ENCODE measurements at regions of chr1 and their contacts with region 1.

Region 1: DNA sequence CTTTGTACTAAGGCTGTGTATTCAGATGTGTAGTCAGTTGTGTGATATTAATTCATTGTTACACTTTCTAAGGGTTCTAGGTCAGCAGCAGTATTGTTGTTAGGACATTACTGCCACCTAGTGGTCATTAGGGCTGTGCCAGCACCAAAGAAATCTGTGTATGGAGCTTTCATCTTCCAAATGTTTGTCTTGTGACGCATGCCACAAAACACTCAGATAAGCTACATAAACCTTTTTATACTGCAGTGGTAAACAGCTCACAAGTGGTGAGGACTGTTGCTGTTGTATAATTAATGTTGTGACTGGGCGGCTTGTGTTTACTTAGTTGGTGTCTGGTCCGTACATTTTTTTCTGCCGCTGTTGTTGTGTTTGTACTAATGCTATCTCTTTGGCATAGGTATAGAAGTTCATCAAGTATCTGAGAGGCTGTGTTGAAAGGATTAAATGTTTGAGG is 51.7 kb downstream of the S1PR1 start:
- DNase-seq: peak; percentile 77 to 82 (median 80)
- H3K4me3 ChIP-seq: no peak overlapping the region
- H3K4me3 Mint-ChIP-seq: peak overlapping the region in 7 of 8 donors; percentile 12 to 78 (median 18)
- H3K27ac ChIP-seq: no peak overlapping the region
- H3K27ac Mint-ChIP-seq: peak overlapping the region; percentile 76 to 87 (median 86)
- H3K4me1 ChIP-seq: peaks cover 89% of the 10 kb centered on the region
- H3K4me1 Mint-ChIP-seq: peaks cover 58 to 90% (median 71%) of the 10 kb centered on the region in 4 donors
- H3K27me3 ChIP-seq: no peaks in the 10 kb centered on the region
- H3K27me3 Mint-ChIP-seq: no peaks in the 10 kb centered on the region

Region 2: DNA sequence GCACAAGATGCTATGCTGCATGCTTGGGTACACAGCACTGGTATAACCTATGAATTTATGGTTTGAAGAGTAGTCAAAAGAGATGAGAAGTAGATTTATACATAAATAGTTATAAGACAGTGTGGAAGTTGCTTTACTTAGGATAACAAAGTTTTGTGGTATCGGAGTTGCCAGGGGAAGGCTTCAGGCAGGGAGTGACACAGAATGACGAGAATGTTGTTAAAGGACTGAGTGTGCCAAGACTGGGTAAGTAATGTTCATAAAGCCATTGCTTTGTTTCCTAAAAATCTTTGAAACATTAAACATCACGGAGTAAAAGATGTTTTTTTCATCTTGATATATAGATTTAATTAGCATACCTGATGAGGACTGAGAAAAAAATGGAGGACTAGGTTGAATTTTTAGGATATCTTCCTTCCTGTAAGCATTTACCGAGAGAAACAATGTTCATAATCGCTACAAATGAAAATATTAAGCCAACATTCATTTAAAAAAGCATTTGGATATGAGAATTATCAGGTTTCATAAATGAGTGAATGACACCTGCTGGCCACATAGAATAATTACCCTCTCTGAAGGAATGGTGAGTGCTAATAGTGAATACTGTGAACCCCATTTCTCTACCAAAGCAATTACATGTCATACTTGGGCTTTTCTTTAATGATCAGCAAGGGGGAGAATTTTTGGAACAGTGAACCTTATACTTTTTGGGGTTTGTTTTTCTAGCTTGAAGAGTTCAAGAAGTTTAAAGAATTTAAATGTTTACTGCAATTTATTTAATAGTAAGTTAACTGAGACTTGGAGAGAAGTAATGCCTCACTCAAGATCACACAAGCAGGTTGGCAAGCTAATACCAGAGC is 422.2 kb before region 1 on chr1:
- CTCF ChIA-PET with region 1: interaction called, 14 read pairs
- POLR2A ChIA-PET with region 1: no interaction called
- intact Hi-C with region 1: no loop called
- DNase-seq: peak in 4 of 5 donors; percentile 16 to 26 (median 22)
- H3K4me3 ChIP-seq: no peak overlapping the region
- H3K4me3 Mint-ChIP-seq: no peak overlapping the region
- H3K27ac ChIP-seq: no peak overlapping the region
- H3K27ac Mint-ChIP-seq: no peak overlapping the region
- H3K4me1 ChIP-seq: no peaks in the 10 kb centered on the region
- H3K4me1 Mint-ChIP-seq: peaks cover 0 to 1% (median 0%) of the 10 kb centered on the region in 4 donors
- H3K27me3 ChIP-seq: no peaks in the 10 kb centered on the region
- H3K27me3 Mint-ChIP-seq: peaks cover 0 to 2% of the 10 kb centered on the region in 2 donors

Region 3: GRCh38 chr1:100928128-100928527 is 360.4 kb before region 1 on chr1:
- CTCF ChIA-PET with region 1: interaction called, 133 read pairs
- POLR2A ChIA-PET with region 1: interaction called, 18 read pairs
- intact Hi-C with region 1: no loop called
- DNase-seq: no peak
- H3K4me3 ChIP-seq: peak overlapping the region in 1 of 2 donors; percentile 39
- H3K4me3 Mint-ChIP-seq: no peak overlapping the region
- H3K27ac ChIP-seq: peak overlapping the region; percentile 50
- H3K27ac Mint-ChIP-seq: no peak overlapping the region
- H3K4me1 ChIP-seq: peaks cover 95% of the 10 kb centered on the region
- H3K4me1 Mint-ChIP-seq: peaks cover 38 to 64% (median 49%) of the 10 kb centered on the region in 4 donors
- H3K27me3 ChIP-seq: no peaks in the 10 kb centered on the region
- H3K27me3 Mint-ChIP-seq: no peaks in the 10 kb centered on the region

Region 4: GRCh38 chr1:101112051-101112780 is 176.3 kb before region 1 on chr1:
- CTCF ChIA-PET with region 1: interaction called, 13 read pairs
- POLR2A ChIA-PET with region 1: interaction called, 11 read pairs
- intact Hi-C with region 1: loop called (anchors 1 kb)
- DNase-seq: peak; percentile 84 to 91 (median 88)
- H3K4me3 ChIP-seq: peak overlapping the region in 1 of 2 donors; percentile 3
- H3K4me3 Mint-ChIP-seq: peak overlapping the region; percentile 52 to 87 (median 70)
- H3K27ac ChIP-seq: peak overlapping the region; percentile 60
- H3K27ac Mint-ChIP-seq: peak overlapping the region; percentile 91 to 100 (median 98)
- H3K4me1 ChIP-seq: peaks cover 42% of the 10 kb centered on the region
- H3K4me1 Mint-ChIP-seq: peaks cover 39 to 51% (median 47%) of the 10 kb centered on the region in 4 donors
- H3K27me3 ChIP-seq: no peaks in the 10 kb centered on the region
- H3K27me3 Mint-ChIP-seq: no peaks in the 10 kb centered on the region

Region 5: DNA sequence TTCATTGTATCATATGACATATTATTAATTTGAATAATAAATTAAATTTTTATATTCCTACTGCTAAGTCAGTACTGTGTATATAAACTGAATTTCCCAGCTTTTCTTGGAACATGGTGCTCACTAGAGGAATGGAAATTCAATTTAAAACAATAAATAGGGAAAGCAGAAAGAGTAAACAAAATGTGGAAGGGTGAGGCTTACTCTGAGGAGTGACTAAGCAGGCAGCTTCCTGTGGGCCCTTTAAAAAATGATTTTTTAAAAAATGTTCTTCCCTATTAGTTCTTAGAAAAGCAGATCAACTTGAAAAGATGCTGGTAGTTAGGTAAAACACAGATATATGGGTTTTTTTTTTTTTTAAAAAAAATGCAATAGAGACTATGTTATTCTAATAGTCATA is 101.2 kb before region 1 on chr1:
- CTCF ChIA-PET with region 1: interaction called, 10 read pairs
- POLR2A ChIA-PET with region 1: no interaction called
- intact Hi-C with region 1: no loop called
- DNase-seq: no peak
- H3K4me3 ChIP-seq: no peak overlapping the region
- H3K4me3 Mint-ChIP-seq: peak overlapping the region in 2 of 8 donors; percentile 1 to 12
- H3K27ac ChIP-seq: no peak overlapping the region
- H3K27ac Mint-ChIP-seq: peak overlapping the region in 2 of 7 donors; percentile 55 to 68
- H3K4me1 ChIP-seq: no peaks in the 10 kb centered on the region
- H3K4me1 Mint-ChIP-seq: peaks cover 6 to 16% (median 10%) of the 10 kb centered on the region in 4 donors
- H3K27me3 ChIP-seq: no peaks in the 10 kb centered on the region
- H3K27me3 Mint-ChIP-seq: no peaks in the 10 kb centered on the region

Region 6: DNA sequence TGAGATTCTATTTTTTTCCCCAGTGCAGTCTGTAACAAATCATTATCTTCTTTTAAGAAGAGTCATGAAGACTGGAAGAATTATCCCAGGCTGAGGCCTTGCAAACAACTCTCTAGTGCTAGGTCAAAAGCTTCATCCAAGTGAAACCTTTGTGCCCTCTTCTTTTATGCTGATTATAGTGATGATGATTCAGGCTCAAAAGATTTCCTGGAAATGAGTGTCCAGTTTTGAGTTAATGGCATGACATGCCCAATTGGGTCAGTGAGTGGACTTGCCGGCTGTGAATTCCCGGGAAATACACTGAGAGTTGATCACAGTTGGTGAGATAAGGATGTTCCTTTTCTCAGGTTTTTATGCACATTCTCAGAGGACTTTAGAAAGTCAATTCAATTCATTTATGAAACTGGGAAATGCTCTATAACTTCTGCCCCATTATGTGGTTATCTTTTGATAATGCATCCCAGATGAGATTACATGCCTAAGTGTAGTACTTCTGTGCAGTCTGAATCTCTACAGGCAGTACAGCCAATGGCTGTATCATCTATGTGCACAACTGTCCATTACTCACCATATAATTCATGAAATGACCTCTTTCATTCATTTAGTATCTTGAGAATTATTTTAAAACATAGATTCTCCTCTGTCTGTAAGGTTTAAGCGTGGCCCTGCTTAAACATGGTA is 14.5 kb after region 1 on chr1:
- CTCF ChIA-PET with region 1: interaction called, 180 read pairs
- POLR2A ChIA-PET with region 1: interaction called, 22 read pairs
- intact Hi-C with region 1: no loop called
- DNase-seq: no peak
- H3K4me3 ChIP-seq: no peak overlapping the region
- H3K4me3 Mint-ChIP-seq: no peak overlapping the region
- H3K27ac ChIP-seq: no peak overlapping the region
- H3K27ac Mint-ChIP-seq: no peak overlapping the region
- H3K4me1 ChIP-seq: peaks cover 28% of the 10 kb centered on the region
- H3K4me1 Mint-ChIP-seq: peaks cover 19 to 34% (median 26%) of the 10 kb centered on the region in 4 donors
- H3K27me3 ChIP-seq: no peaks in the 10 kb centered on the region
- H3K27me3 Mint-ChIP-seq: no peaks in the 10 kb centered on the region

Region 7: GRCh38 chr1:101706366-101706765 is 417.8 kb after region 1 on chr1:
- CTCF ChIA-PET with region 1: no interaction called
- POLR2A ChIA-PET with region 1: no interaction called
- intact Hi-C with region 1: no loop called
- DNase-seq: no peak
- H3K4me3 ChIP-seq: no peak overlapping the region
- H3K4me3 Mint-ChIP-seq: no peak overlapping the region
- H3K27ac ChIP-seq: no peak overlapping the region
- H3K27ac Mint-ChIP-seq: no peak overlapping the region
- H3K4me1 ChIP-seq: no peaks in the 10 kb centered on the region
- H3K4me1 Mint-ChIP-seq: no peaks in the 10 kb centered on the region
- H3K27me3 ChIP-seq: no peaks in the 10 kb centered on the region
- H3K27me3 Mint-ChIP-seq: no peaks in the 10 kb centered on the region

Measured in CD4-positive, alpha-beta memory T cell (primary cell).